ENCODE measurements at regions of chr22 and their contacts with region 1.

Region 1: GRCh38 chr22:39454385-39454871 is 2.4 kb upstream of the MGAT3 start:
- DNase-seq: no peak
- H3K4me3 ChIP-seq: no peak overlapping the region
- H3K27ac ChIP-seq: no peak overlapping the region
- H3K4me1 ChIP-seq: no peaks in the 10 kb centered on the region
- H3K27me3 ChIP-seq: peaks cover 20% of the 10 kb centered on the region
- CTCF ChIP-seq: no peak

Region 2: GRCh38 chr22:39349967-39350726 is 104.3 kb before region 1 on chr22 and contains the start of gene SYNGR1:
- CTCF ChIA-PET with region 1: no interaction called
- dilution Hi-C with region 1: loop called (anchors 5 kb)
- in situ Hi-C with region 1: no loop called
- intact Hi-C with region 1: no loop called
- DNase-seq: no peak
- H3K4me3 ChIP-seq: peak within 1 kb of the TSS in 2 of 3 experiments; percentile 43 to 50
- H3K27ac ChIP-seq: no peak within 1 kb of the TSS
- H3K4me1 ChIP-seq: peaks cover 17% of the 10 kb centered on the region
- H3K27me3 ChIP-seq: peaks cover 4% of the 10 kb centered on the region
- CTCF ChIP-seq: no peak
- total RNA-seq, gene SYNGR1: 0.89 to 1.5 TPM

Region 3: GRCh38 chr22:39502109-39502788 is 47.8 kb after region 1 on chr22 and contains the start of gene MIEF1:
- CTCF ChIA-PET with region 1: no interaction called
- dilution Hi-C with region 1: loop called (anchors 5 kb)
- in situ Hi-C with region 1: no loop called
- intact Hi-C with region 1: no loop called
- DNase-seq: peak; percentile 91
- H3K4me3 ChIP-seq: peak within 1 kb of the TSS; percentile 67 to 86 (median 79)
- H3K27ac ChIP-seq: peak within 1 kb of the TSS; percentile 58
- H3K4me1 ChIP-seq: peaks cover 11% of the 10 kb centered on the region
- H3K27me3 ChIP-seq: no peaks in the 10 kb centered on the region
- CTCF ChIP-seq: no peak
- total RNA-seq, gene MIEF1: 36.8 to 36.9 TPM